ENCODE measurements at regions of chr17 and their contacts with region 1.

Region 1: DNA sequence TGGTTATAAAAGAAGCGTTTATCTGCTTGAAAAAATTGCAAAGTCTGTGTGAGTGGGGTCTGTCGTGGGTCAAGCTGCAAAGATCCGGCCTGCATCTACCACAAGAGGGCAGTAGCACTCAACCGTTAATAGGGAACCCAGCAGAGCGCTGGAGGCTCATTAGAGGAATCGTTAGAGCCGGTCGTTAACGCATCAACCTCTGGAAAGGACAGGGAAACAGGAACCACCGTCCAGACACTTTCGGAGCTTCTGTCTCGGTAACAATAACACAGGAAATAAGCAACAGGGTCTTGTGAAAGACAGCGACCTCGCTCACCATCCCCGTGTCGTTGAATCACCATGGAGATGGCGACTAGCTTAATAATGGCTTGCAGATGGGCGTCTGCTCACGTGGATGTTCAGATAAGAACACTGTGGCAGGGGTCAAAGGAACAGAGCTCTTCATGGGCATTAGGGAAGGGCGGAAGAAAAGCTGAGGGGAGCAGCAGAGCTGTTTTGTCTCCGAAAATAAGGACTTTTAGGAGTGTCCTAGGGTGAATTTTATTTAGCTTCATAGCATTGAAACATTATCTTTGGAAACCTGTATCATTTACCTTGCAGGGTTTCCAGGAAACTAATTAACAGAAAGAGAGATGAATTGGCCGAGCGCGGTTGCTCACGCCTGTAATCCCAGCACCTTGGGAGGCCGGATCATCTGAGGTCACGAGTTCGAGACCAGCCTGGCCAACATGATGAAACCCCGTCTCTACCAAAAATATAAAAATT is 11.9 kb upstream of the NSRP1 start:
- DNase-seq: peak; percentile 84
- H3K4me3 Mint-ChIP-seq: peak overlapping the region; percentile 75
- H3K27ac Mint-ChIP-seq: no peak overlapping the region
- H3K4me1 Mint-ChIP-seq: peaks cover 5% of the 10 kb centered on the region
- H3K27me3 Mint-ChIP-seq: no peaks in the 10 kb centered on the region

Region 2: DNA sequence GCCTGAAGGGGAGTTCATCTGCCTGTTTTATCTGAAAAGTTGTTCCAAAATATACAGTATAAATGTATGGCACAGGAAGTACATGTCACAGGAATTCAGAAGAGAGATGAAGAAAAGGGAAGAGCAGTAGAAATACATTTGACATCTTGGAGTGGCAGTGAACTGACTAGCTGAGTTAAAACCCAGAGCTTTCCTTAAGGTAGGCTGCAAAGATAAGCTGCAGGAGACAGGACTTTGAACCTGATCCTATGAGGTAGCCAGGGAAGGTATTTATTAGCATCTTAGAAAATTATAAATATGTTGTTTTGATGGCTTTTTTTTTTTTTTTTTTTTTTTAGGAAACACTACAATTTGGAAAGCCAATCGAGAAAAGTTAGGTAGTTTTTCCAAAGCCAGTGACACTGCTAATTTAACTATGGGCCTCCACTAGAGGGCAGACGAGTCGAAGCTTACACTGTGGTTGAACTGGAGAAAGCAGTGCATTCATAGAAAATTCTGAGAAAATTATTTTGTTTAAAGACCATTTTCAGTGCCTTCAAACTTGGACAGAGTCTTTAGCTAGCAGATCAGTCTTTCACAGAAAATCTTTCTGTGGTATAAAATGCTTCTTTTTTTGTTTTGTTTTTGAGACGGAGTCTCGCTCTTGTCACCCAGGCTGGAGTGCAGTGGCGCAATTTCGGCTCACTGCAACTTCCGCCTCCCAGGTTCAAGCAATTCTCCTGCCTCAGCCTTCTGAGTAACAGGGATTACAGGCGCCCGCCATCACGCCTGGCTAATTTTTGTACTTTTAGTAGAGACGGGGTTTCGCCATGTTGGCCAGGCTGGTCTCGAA is 297.0 kb before region 1 on chr17:
- CTCF ChIA-PET with region 1: no interaction called
- intact Hi-C with region 1: no loop called
- DNase-seq: peak; percentile 87
- H3K4me3 Mint-ChIP-seq: no peak overlapping the region
- H3K27ac Mint-ChIP-seq: no peak overlapping the region
- H3K4me1 Mint-ChIP-seq: peaks cover 14% of the 10 kb centered on the region
- H3K27me3 Mint-ChIP-seq: no peaks in the 10 kb centered on the region

Region 3: DNA sequence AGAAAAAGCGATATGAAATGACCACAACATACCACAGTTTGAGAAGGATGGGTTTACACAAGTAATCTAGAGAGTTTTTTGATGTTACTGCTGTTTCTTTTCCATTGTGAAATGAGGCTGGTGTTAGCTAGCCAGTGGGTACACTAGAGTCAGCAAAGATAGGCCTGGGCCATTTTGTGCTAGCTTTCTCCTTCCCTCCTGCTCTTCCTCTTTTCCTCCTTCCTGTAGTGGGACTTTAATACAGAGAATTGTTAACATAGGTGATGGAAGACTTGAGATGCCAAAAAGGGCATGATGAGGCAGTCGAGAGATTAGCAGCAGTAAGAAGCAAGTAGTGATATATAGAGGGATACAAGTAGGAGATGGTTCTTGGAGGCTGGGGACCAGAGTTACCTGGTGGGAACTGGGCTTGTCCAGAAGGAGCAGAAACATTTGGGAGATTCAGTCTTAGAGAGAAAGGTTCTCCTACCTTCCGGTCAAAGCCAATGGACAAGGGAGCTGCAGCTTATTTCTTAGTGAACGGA is 19.6 kb after region 1 on chr17:
- CTCF ChIA-PET with region 1: interaction called, 41 read pairs
- intact Hi-C with region 1: no loop called
- DNase-seq: no peak
- H3K4me3 Mint-ChIP-seq: no peak overlapping the region
- H3K27ac Mint-ChIP-seq: no peak overlapping the region
- H3K4me1 Mint-ChIP-seq: peaks cover 44% of the 10 kb centered on the region
- H3K27me3 Mint-ChIP-seq: no peaks in the 10 kb centered on the region

Region 4: DNA sequence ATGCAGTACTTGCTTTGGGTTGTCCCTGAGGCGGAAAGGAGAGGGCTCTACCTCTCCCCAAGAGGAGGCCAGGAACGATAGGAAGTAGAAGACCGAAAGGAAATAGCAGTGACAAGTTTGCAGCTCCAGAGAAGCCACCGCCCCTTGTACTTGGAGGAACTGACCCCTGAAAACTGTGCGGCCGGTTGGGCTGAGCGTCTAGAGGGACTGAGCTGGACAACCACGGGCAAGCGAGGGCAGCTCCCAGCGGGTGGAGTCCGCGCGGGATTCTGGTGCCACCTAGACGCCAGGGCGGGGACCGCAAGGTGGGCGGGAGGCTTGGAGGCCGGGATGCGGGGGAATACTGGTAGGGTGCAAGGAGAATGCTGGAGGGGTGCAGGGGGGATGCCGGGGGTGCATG is 132.0 kb after region 1 on chr17:
- CTCF ChIA-PET with region 1: interaction called, 8 read pairs
- intact Hi-C with region 1: loop called (anchors 1 kb)
- DNase-seq: peak; percentile 46
- H3K4me3 Mint-ChIP-seq: no peak overlapping the region
- H3K27ac Mint-ChIP-seq: no peak overlapping the region
- H3K4me1 Mint-ChIP-seq: peaks cover 22% of the 10 kb centered on the region
- H3K27me3 Mint-ChIP-seq: peaks cover 62% of the 10 kb centered on the region

Region 5: DNA sequence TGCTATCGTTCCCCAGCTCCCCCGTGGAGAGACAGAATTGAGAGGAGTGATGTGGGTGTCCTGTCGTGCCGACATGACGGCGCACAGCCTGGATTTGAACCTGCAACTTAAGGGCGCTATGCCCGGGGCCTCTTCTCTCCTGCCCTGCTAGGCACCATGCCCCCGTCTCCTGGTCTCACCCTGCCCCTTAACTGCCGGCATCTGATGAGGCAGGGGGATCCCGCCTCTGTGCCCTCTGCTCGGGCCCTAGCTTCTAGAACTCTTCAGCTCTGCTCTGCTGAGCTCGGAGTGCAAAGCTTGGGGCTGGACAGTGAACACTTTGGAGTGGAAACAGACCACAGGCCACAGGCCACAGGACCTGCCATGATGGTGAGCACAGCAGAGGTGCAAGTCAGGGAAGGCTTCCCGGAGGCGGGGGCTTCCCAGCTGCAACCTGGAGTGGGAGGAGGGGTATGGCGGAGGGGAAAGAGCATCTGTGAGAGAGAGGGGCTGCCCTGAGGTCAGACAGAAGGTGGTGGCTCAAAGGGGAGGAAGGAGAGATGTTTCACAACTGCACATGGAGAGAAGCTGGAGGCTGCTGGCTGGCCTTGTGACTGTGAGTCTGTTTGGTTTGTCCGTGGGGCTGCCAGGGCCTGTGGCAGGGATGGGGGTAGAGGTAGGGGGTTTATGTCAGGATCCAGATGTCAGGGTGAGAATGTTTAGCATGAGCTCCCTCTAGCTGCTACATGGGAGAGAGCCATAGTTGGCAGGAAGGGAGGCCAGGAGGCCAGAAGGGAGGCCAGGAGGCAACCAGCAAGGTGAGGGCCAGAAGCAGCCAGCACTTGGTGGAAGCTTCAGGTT is 611.9 kb after region 1 on chr17:
- CTCF ChIA-PET with region 1: interaction called, 3 read pairs
- intact Hi-C with region 1: loop called (anchors 2 kb)
- DNase-seq: peak; percentile 36
- H3K4me3 Mint-ChIP-seq: no peak overlapping the region
- H3K27ac Mint-ChIP-seq: no peak overlapping the region
- H3K4me1 Mint-ChIP-seq: peaks cover 11% of the 10 kb centered on the region
- H3K27me3 Mint-ChIP-seq: no peaks in the 10 kb centered on the region